GM23248 (cell line): ENCODE measurements at regions of chr6 and their contacts with region 1.

Region 1: GRCh38 chr6:154675602-154676088 is 57.6 kb upstream of the SCAF8 start:
- DNase-seq: peak; percentile 92
- H3K4me3 ChIP-seq: no peak overlapping the region
- H3K27ac ChIP-seq: no peak overlapping the region
- H3K4me1 ChIP-seq: no peaks in the 10 kb centered on the region
- H3K27me3 ChIP-seq: no peaks in the 10 kb centered on the region

Region 2: DNA sequence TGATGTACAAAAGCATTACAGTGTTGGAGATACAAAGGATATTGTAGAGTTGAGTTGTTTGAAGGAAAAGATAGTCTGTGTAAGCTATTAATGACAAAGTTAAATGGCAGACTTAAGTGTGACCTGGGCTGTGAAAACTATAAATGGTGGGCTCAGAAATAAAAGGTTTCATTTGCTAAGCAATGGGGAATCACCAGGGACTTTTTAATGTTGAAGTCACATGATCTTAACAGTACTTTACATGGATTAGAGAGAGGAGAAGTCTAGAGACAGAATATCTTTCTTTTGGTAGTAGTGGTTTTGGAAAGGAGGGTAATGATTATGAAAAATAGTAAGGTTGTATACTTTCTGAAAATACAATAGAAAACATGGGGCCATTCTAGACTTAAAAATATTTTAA is 124.7 kb after region 1 on chr6:
- in situ Hi-C with region 1: loop called (anchors 5 kb)
- DNase-seq: no peak
- H3K4me3 ChIP-seq: no peak overlapping the region
- H3K27ac ChIP-seq: no peak overlapping the region
- H3K4me1 ChIP-seq: no peaks in the 10 kb centered on the region
- H3K27me3 ChIP-seq: no peaks in the 10 kb centered on the region

Region 3: GRCh38 chr6:154909821-154910220 is 234.2 kb after region 1 on chr6:
- in situ Hi-C with region 1: no loop called
- DNase-seq: no peak
- H3K4me3 ChIP-seq: no peak overlapping the region
- H3K27ac ChIP-seq: no peak overlapping the region
- H3K4me1 ChIP-seq: no peaks in the 10 kb centered on the region
- H3K27me3 ChIP-seq: no peaks in the 10 kb centered on the region